Activated CD4-positive, alpha-beta T cell treated with anti-CD3 and anti-CD28 coated beads, Interleukin-2, amount 10 ng/mL, durations not matched to agents 24 days and 14 days (primary cell): ENCODE measurements at regions of chr1 and their contacts with region 1.

Region 1: DNA sequence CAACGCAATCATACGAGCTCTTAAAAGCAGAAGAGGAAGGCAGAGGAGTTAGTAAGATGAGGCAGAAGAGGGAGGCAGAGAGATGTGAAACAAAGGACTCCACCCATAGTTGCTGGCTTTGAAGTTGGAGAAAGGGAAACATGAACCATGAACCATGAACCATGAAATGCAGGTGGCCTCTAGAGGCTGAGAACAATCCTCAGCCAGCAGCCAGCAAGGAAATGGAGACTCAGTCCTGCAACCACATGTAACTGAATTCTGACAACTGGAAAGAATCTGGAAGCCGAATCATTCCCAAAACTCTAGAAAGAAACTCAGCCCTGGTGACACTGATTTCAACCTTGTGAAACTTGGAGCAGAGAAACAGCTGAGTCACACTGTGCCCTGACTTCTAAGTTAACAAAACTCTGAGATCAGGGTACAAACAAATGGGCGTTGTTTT is 10.1 kb downstream of the DIPK1A start:
- DNase-seq: peak; percentile 80
- H3K4me3 Mint-ChIP-seq: no peak overlapping the region
- H3K27ac Mint-ChIP-seq: no peak overlapping the region
- H3K4me1 Mint-ChIP-seq: peaks cover 42% of the 10 kb centered on the region
- H3K27me3 Mint-ChIP-seq: no peaks in the 10 kb centered on the region

Region 2: DNA sequence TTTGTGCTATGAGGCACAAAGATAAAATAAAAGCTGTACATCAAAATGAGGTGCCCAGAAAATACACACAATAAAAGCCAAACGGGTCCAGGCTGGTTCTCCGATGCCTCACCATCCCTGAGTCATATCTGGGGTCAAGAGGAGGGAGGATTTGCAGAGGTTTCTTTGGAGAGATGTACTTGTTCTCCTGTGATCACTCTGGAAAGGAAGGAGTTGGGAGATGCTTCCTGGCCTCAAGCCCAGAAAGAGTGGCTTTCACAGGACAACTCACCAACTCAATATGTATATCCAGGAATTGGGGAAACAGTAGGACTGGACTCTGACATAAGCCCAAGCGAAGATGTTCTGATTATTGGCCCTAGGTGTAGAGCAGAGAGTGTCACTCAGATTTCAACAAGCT is 41.8 kb before region 1 on chr1:
- intact Hi-C with region 1: loop called (anchors 5 kb)
- DNase-seq: no peak
- H3K4me3 Mint-ChIP-seq: no peak overlapping the region
- H3K27ac Mint-ChIP-seq: no peak overlapping the region
- H3K4me1 Mint-ChIP-seq: peaks cover 27% of the 10 kb centered on the region
- H3K27me3 Mint-ChIP-seq: no peaks in the 10 kb centered on the region